ENCODE measurements at regions of chr10 and their contacts with region 1.

Region 1: DNA sequence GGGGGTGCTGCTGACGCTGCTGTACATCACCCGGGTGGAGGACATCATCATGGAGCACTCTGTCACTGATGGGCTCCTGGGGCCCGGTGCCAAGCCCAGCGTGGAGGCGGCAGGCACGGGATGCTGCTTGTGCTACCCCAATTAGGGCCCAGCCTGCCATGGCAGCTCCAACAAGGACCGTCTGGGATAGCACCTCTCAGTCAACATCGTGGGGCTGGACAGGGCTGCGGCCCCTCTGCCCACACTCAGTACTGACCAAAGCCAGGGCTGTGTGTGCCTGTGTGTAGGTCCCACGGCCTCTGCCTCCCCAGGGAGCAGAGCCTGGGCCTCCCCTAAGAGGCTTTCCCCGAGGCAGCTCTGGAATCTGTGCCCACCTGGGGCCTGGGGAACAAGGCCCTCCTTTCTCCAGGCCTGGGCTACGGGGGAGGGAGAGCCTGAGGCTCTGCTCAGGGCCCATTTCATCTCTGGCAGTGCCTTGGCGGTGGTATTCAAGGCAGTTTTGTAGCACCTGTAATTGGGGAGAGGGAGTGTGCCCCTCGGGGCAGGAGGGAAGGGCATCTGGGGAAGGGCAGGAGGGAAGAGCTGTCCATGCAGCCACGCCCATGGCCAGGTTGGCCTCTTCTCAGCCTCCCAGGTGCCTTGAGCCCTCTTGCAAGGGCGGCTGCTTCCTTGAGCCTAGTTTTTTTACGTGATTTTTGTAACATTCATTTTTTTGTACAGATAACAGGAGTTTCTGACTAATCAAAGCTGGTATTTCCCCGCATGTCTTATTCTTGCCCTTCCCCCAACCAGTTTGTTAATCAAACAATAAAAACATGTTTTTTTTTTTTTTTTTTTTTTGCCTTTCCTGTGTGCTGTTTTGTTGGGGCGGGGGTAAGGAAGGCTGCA is 55.8 kb downstream of the TSPAN15 start:
- DNase-seq: peak in 1 of 2 experiments; percentile 27
- ATAC-seq: peak; percentile 42 to 48
- H3K4me3 ChIP-seq: peak overlapping the region; percentile 25; the same call in 2 of the 3 replicates
- H3K27ac ChIP-seq: peak overlapping the region; percentile 65 to 91
- H3K4me1 ChIP-seq: peaks cover 13% of the 10 kb centered on the region
- CTCF ChIP-seq: no peak
- EP300 ChIP-seq: no peak
- POLR2A ChIP-seq: no peak
- RAD21 ChIP-seq: no peak

Region 2: GRCh38 chr10:69418052-69418752 is 88.9 kb before region 1 on chr10:
- CTCF ChIA-PET with region 1: interaction called, 44 read pairs
- POLR2A ChIA-PET with region 1: no interaction called
- DNase-seq: no peak
- ATAC-seq: no peak
- H3K4me3 ChIP-seq: no peak overlapping the region
- H3K27ac ChIP-seq: peak overlapping the region in 1 of 2 experiments; percentile 43; a peak in 1 of 6 replicates
- H3K4me1 ChIP-seq: peaks cover 11% of the 10 kb centered on the region
- CTCF ChIP-seq: no peak
- EP300 ChIP-seq: no peak
- POLR2A ChIP-seq: no peak
- RAD21 ChIP-seq: no peak

Region 3: DNA sequence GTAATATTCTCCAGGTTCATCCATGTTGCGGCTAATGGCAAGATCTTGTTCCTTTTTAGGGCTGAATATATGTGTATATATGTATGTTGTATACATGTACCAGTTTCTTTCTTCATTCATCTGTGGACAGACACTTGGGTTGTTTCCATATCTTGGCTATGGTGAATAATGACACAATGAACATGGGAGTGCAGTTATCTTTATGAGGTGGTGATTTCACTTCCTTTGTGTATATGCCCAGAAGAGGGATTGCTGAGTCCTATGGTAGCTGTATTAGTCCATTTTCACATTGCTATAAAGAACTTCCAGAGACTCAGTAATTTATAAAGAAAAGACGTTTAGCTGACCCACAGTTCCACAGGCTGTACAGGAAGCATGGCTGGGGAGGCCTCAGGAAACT is 72.9 kb before region 1 on chr10:
- CTCF ChIA-PET with region 1: interaction called, 90 read pairs
- POLR2A ChIA-PET with region 1: no interaction called
- DNase-seq: no peak
- ATAC-seq: no peak
- H3K4me3 ChIP-seq: no peak overlapping the region
- H3K27ac ChIP-seq: peak overlapping the region in 1 of 2 experiments; percentile 27; a peak in 2 of 6 replicates
- H3K4me1 ChIP-seq: peaks cover 20% of the 10 kb centered on the region
- CTCF ChIP-seq: no peak
- EP300 ChIP-seq: no peak
- POLR2A ChIP-seq: no peak
- RAD21 ChIP-seq: no peak

Region 4: GRCh38 chr10:69486922-69487666 is 20.0 kb before region 1 on chr10:
- CTCF ChIA-PET with region 1: interaction called, 25 read pairs
- POLR2A ChIA-PET with region 1: interaction called, 3 read pairs
- DNase-seq: no peak
- ATAC-seq: no peak
- H3K4me3 ChIP-seq: no peak overlapping the region
- H3K27ac ChIP-seq: no peak overlapping the region
- H3K4me1 ChIP-seq: no peaks in the 10 kb centered on the region
- CTCF ChIP-seq: no peak
- EP300 ChIP-seq: no peak
- POLR2A ChIP-seq: no peak
- RAD21 ChIP-seq: no peak

Measured in A549 (cell line).